Aorta (tissue), 5 donors: ENCODE measurements at regions of chr10 and their contacts with region 1.

Region 1: DNA sequence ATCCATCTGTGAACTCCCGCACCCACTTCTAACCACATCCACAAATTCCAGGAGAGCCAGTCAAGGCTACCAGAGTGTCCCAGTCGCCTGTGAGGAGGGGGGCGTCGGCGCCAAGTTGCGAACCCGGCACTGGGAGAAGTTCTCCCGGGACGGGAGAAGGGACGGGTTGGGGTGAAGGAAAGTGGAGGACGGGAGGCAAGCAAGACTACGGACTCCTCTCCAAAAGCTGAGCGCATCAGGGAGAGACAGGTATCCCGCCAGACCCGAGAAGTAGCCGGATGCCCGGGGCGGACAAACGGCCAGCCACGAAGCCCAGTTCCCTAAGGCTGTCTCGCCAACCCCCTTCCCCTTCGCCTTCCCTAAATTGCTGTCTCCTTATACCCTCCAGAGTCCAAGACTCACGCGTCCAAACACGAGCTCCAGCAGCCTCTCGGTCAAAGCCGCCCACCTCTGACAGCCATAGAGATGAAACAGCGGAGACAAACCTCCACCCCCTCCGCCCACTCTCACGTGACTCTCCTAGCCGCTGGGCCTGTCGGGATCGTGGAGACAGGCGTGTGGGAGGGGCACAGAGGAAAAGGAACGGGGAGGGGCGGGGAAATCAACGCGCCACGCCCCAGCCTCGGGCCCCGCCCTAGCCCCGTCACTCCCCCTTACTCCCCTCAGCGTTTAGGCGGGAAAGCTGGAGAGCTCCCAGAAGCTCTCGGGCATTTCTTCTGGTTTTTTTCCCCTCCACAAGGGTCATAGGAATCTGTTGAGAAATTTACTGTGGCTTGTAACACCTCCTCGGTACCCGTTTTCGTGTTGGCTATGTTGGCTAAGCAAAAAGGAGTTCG is at the start of gene MICU1:
- DNase-seq: peak; percentile 98
- ATAC-seq: peak; percentile 100
- H3K4me3 ChIP-seq: peak within 1 kb of the TSS; percentile 72 to 77
- H3K27ac ChIP-seq: peak within 1 kb of the TSS; percentile 7 to 55
- H3K4me1 ChIP-seq: peaks cover 2% of the 10 kb centered on the region in 2 donors
- H3K27me3 ChIP-seq: no peaks in the 10 kb centered on the region
- total RNA-seq, gene MICU1: 39.5 to 40.7 TPM

Region 2: DNA sequence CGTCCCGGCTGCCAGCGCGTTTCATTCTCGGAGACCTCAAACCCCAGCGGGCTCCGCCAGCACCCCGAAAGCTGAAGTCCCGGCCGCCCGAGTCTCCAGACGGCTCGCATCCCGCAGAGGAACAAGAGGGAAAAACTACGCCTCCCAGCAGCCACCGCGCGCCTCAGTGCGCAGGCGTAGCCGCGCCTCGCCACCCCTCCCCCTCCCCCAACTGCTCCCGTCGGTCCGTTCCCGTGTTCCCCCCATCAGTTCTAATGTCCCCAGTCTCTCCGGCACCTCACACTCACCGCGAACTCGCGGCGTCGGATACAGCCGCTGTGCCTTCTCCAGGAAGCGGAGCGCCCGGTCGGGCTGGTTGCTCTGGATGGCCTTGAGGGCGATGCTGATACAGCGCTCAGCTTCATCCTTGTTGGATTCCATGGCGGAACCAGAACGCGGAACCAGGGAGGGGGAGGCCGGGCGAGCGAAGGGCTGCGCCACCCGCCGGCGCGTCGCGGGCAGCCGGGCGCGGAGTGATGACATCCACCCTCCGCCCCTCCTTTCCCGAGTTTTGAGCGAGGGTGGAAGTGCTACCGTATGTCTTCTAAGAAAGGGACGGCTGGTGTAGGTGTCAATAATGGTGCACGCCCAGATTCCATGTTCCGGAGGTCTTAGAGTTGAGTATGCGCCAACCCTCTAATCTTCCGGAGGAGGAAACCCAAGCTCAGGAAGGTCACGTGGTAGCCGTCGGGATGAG is 271.2 kb before region 1 on chr10 and contains the start of gene DNAJB12:
- intact Hi-C with region 1: loop called in 1 of 2 experiments (anchors 10 kb)
- DNase-seq: peak; percentile 94 to 96
- ATAC-seq: peak; percentile 96
- H3K4me3 ChIP-seq: peak within 1 kb of the TSS; percentile 70 to 76
- H3K27ac ChIP-seq: peak within 1 kb of the TSS in 1 of 2 donors; percentile 88
- H3K4me1 ChIP-seq: peaks cover 0 to 2% of the 10 kb centered on the region in 2 donors
- H3K27me3 ChIP-seq: no peaks in the 10 kb centered on the region
- total RNA-seq, gene DNAJB12: 33.1 to 34.7 TPM

Region 3: DNA sequence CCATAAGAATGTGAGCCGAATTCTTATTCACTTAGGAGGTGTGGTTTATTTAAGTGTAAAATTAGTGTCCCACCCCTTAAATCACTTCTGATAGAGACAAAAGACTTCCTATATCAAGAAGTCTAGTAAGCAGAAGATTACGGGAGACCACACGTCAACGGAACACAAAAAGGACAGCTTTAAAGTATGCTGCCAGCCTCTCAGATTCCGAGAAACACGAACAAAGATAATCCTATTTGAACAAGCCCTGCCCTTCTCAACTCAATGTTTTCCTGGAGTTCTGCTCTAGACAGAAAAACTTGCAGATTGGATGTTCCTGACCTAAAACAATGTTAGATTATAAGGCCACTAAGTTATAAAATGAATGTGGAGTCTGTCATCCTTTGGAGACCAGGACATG is 61.2 kb after region 1 on chr10:
- intact Hi-C with region 1: loop called (anchors 2 to 5 kb)
- DNase-seq: no peak
- ATAC-seq: no peak
- H3K4me3 ChIP-seq: no peak overlapping the region
- H3K27ac ChIP-seq: no peak overlapping the region
- H3K4me1 ChIP-seq: peaks cover 0 to 3% of the 10 kb centered on the region in 2 donors
- H3K27me3 ChIP-seq: no peaks in the 10 kb centered on the region

Region 4: DNA sequence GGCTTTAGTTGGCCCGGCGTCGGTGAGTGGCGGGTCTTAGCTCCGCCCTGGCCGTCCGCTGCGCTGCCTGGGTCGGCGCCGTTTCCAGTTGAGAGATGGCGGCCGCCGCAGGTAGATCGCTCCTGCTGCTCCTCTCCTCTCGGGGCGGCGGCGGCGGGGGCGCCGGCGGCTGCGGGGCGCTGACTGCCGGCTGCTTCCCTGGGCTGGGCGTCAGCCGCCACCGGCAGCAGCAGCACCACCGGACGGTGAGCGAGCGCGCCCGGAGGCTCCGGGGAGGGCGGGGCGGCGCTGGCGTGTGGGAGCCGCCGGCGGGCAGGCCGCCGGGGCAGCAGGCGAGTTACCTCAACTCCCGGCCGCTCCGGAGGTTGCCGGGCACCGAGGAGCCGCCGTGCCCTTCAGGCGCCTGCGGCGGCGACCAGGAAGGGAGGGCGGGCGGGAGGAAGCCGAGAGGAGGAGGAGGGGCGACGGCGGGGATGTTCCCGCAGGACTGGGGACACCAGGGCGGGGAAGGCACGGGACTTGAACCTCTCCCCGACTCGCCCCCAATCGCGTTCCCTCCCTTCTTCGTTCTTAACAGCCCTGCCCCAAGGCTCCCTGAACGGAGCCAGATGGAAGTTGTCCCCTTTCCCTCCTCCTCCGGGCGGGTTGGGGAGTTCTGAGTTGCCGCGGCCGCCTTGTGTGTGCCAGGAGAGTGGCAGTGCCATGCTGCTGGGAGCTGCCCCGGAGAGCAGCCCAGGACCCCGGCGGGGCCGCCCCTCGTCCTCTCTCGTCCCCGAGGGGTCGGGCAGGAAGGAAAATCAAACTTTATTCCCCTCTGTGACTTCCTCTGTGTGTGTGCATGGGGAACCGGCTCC is 66.5 kb after region 1 on chr10 and contains the start of gene MCU:
- intact Hi-C with region 1: loop called (anchors 2 to 5 kb)
- DNase-seq: peak; percentile 96 to 98
- ATAC-seq: peak; percentile 96
- H3K4me3 ChIP-seq: peak within 1 kb of the TSS; percentile 80 to 87
- H3K27ac ChIP-seq: peak within 1 kb of the TSS; percentile 92 to 98
- H3K4me1 ChIP-seq: peaks cover 5% of the 10 kb centered on the region in 2 donors
- H3K27me3 ChIP-seq: no peaks in the 10 kb centered on the region
- total RNA-seq, gene MCU: 31.5 to 45.6 TPM